Psoas muscle (tissue), 8 donors: ENCODE measurements at regions of chr2 and their contacts with region 1.

Region 1: GRCh38 chr2:170873035-170873692 is 55.9 kb upstream of the GORASP2 start:
- DNase-seq: peak; percentile 59 to 76
- ATAC-seq: peak; percentile 76 to 91 (median 86)
- H3K4me3 ChIP-seq: peak overlapping the region; percentile 39
- H3K27ac ChIP-seq: no peak overlapping the region
- H3K4me1 ChIP-seq: peaks cover 4% of the 10 kb centered on the region
- H3K27me3 ChIP-seq: no peaks in the 10 kb centered on the region
- CTCF ChIP-seq: peak; percentile 85

Region 2: DNA sequence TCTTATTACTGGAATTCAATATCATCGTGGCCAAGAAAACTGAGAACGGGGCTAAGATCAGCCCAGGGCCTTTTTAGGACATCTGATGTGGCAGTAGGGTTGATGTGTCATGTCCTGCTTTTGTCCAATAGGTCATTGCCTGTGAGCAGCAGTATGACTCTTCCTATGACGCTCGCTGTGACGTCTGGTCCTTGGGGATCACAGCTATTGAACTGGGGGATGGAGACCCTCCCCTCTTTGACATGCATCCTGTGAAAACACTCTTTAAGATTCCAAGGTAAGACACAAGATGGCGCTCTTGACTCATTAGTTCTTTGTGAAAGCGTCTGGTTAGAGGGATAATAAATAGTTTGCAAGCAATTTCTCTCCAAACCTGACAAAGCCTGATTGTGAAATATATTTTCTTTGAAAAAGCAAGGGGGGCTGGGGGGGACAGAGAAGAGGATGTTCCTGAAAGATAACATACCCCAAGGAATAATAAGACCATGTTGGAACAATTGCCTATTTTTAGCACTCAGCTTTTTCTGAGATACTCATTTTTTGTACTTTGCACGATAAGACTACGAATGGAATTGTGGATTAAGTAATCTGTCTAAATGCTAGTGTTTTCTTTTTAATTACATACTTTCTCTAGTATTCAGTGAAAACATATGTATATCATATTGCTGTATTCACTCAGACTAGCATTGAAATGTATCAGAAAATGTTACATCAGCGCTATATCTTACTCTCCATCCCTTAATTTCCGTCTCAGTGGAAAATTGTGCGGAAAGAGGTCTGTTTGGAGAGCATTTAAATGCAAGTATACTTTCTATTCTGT is 637.1 kb before region 1 on chr2:
- intact Hi-C with region 1: loop called in 1 of 2 experiments (anchors 5 kb)
- DNase-seq: peak in 1 of 2 donors; percentile 23
- ATAC-seq: peak in 1 of 4 donors; percentile 51
- H3K4me3 ChIP-seq: no peak overlapping the region
- H3K27ac ChIP-seq: no peak overlapping the region
- H3K4me1 ChIP-seq: no peaks in the 10 kb centered on the region
- H3K27me3 ChIP-seq: no peaks in the 10 kb centered on the region
- CTCF ChIP-seq: no peak

Region 3: DNA sequence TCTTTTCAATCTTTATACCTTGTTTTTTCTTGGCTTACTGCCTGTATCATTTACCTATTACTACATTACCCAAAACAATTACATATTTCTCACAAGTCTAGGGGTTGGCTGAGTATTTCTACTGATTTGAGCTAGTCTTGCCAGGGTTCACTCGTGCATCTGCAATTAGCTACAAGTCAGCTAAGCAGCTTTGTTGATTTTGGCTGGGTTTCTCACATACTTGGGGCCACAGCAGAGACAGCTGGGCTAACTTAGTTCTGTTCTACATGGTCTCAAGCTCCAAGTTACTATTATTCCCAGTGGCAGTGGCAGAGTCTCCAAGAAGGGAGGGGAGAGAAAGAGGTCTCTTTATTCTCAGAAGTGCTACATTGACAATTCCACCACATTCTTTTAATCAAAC is 212.8 kb before region 1 on chr2:
- intact Hi-C with region 1: no loop called
- DNase-seq: no peak
- ATAC-seq: no peak
- H3K4me3 ChIP-seq: no peak overlapping the region
- H3K27ac ChIP-seq: no peak overlapping the region
- H3K4me1 ChIP-seq: no peaks in the 10 kb centered on the region
- H3K27me3 ChIP-seq: no peaks in the 10 kb centered on the region
- CTCF ChIP-seq: no peak

Region 4: GRCh38 chr2:171102802-171103201 is 229.6 kb after region 1 on chr2:
- intact Hi-C with region 1: no loop called
- DNase-seq: no peak
- ATAC-seq: no peak
- H3K4me3 ChIP-seq: no peak overlapping the region
- H3K27ac ChIP-seq: no peak overlapping the region
- H3K4me1 ChIP-seq: no peaks in the 10 kb centered on the region
- H3K27me3 ChIP-seq: no peaks in the 10 kb centered on the region
- CTCF ChIP-seq: no peak